CD4-positive, alpha-beta memory T cell (primary cell): ENCODE measurements at regions of chr16 and their contacts with region 1.

Region 1: DNA sequence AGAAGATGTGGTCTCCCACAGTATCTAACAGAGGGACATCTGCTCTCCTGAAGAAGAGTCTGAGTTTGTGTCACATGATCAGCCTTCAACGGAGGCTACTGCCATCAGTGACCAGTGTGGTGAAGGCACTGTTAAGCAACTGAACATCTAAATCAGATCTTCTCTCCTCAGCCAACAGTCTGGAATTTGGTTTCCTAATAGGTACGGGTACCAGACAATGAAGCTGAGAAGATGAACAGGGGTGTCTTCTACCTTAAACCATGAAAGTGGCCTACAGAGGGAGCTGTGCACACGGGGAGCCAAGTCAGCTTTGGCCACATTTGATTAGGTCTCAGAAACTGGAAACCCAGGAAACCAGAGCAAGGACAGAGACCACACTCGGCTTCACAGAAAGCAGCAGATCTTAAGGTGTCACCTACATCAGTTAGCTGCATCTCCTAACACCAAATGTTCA is 41.8 kb downstream of the BRD7 start:
- DNase-seq: peak; percentile 80 to 90 (median 84)
- H3K4me3 ChIP-seq: no peak overlapping the region
- H3K4me3 Mint-ChIP-seq: peak overlapping the region in 4 of 8 donors; percentile 37 to 70 (median 44)
- H3K27ac ChIP-seq: peak overlapping the region; percentile 51
- H3K27ac Mint-ChIP-seq: peak overlapping the region; percentile 74 to 98 (median 90)
- H3K4me1 ChIP-seq: peaks cover 32% of the 10 kb centered on the region
- H3K4me1 Mint-ChIP-seq: peaks cover 34 to 71% (median 38%) of the 10 kb centered on the region in 4 donors
- H3K27me3 ChIP-seq: no peaks in the 10 kb centered on the region
- H3K27me3 Mint-ChIP-seq: no peaks in the 10 kb centered on the region

Region 2: GRCh38 chr16:50024684-50025536 is 302.1 kb before region 1 on chr16 and contains the start of gene CNEP1R1:
- CTCF ChIA-PET with region 1: interaction called, 10 read pairs
- POLR2A ChIA-PET with region 1: interaction called, 4 read pairs
- intact Hi-C with region 1: no loop called
- DNase-seq: peak; percentile 93 to 97 (median 95)
- H3K4me3 ChIP-seq: peak within 1 kb of the TSS; percentile 76 to 85
- H3K4me3 Mint-ChIP-seq: peak within 1 kb of the TSS; percentile 94 to 99 (median 96)
- H3K27ac ChIP-seq: peak within 1 kb of the TSS; percentile 75
- H3K27ac Mint-ChIP-seq: peak within 1 kb of the TSS; percentile 91 to 99 (median 96)
- H3K4me1 ChIP-seq: peaks cover 34% of the 10 kb centered on the region
- H3K4me1 Mint-ChIP-seq: peaks cover 18 to 32% (median 24%) of the 10 kb centered on the region in 4 donors
- H3K27me3 ChIP-seq: no peaks in the 10 kb centered on the region
- H3K27me3 Mint-ChIP-seq: peaks cover 0 to 4% of the 10 kb centered on the region in 2 donors
- total RNA-seq, gene CNEP1R1: 34.2 to 40.8 TPM

Region 3: DNA sequence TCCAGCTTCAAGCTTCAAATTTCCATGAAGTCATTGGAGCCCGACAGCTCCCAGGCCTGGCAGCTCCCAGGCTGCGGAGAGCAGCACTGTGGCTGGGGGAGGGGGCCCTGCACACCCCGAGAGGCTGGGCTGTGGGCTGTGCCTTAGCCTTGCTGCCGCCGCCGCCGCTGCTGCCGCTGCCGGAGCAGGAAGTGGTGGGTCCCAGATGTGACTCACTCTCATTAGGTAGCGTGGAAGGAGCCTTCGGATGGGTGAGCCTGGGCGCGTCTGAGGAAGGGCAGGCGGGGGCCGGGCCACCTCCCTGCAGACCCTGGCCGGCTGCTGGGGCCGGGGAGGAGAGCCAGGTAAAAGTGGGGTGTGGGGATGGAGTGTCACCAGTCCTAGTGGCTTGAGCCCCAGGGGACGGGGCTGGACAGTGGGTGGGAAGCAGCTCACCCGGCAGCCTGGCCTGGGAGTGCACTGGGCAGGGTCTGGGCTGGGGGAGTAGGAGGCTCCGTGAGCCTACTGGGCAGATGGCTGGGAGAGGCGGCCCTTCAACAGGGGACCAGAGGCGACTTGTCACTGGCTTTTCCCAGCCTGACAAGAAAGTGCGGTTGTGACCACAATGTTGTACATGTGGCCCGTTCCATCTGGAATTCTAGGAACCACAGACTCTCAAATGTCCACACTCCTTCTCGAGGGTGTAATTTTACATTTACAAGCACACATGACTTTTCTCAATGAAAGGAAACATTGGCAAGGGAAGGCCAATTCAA is 60.5 kb before region 1 on chr16 and contains the start of gene ADCY7:
- CTCF ChIA-PET with region 1: interaction called, 26 read pairs
- POLR2A ChIA-PET with region 1: interaction called, 55 read pairs
- intact Hi-C with region 1: loop called (anchors 2 kb)
- DNase-seq: peak; percentile 77 to 92 (median 80)
- H3K4me3 ChIP-seq: peak within 1 kb of the TSS; percentile 75 to 76
- H3K4me3 Mint-ChIP-seq: peak within 1 kb of the TSS; percentile 93 to 99 (median 98)
- H3K27ac ChIP-seq: peak within 1 kb of the TSS; percentile 81
- H3K27ac Mint-ChIP-seq: peak within 1 kb of the TSS; percentile 95 to 99 (median 98)
- H3K4me1 ChIP-seq: peaks cover 60% of the 10 kb centered on the region
- H3K4me1 Mint-ChIP-seq: peaks cover 40 to 84% (median 56%) of the 10 kb centered on the region in 4 donors
- H3K27me3 ChIP-seq: no peaks in the 10 kb centered on the region
- H3K27me3 Mint-ChIP-seq: no peaks in the 10 kb centered on the region
- total RNA-seq, gene ADCY7: 230 to 235 TPM

Region 4: GRCh38 chr16:50281964-50282538 is 44.9 kb before region 1 on chr16:
- CTCF ChIA-PET with region 1: interaction called, 11 read pairs
- POLR2A ChIA-PET with region 1: interaction called, 9 read pairs
- intact Hi-C with region 1: no loop called
- DNase-seq: peak; percentile 62 to 84 (median 67)
- H3K4me3 ChIP-seq: peak overlapping the region in 1 of 2 donors; percentile 21
- H3K4me3 Mint-ChIP-seq: peak overlapping the region; percentile 76 to 92 (median 82)
- H3K27ac ChIP-seq: peak overlapping the region; percentile 57
- H3K27ac Mint-ChIP-seq: peak overlapping the region; percentile 77 to 99 (median 91)
- H3K4me1 ChIP-seq: peaks cover 94% of the 10 kb centered on the region
- H3K4me1 Mint-ChIP-seq: peaks cover 59 to 94% (median 81%) of the 10 kb centered on the region in 4 donors
- H3K27me3 ChIP-seq: no peaks in the 10 kb centered on the region
- H3K27me3 Mint-ChIP-seq: no peaks in the 10 kb centered on the region

Region 5: DNA sequence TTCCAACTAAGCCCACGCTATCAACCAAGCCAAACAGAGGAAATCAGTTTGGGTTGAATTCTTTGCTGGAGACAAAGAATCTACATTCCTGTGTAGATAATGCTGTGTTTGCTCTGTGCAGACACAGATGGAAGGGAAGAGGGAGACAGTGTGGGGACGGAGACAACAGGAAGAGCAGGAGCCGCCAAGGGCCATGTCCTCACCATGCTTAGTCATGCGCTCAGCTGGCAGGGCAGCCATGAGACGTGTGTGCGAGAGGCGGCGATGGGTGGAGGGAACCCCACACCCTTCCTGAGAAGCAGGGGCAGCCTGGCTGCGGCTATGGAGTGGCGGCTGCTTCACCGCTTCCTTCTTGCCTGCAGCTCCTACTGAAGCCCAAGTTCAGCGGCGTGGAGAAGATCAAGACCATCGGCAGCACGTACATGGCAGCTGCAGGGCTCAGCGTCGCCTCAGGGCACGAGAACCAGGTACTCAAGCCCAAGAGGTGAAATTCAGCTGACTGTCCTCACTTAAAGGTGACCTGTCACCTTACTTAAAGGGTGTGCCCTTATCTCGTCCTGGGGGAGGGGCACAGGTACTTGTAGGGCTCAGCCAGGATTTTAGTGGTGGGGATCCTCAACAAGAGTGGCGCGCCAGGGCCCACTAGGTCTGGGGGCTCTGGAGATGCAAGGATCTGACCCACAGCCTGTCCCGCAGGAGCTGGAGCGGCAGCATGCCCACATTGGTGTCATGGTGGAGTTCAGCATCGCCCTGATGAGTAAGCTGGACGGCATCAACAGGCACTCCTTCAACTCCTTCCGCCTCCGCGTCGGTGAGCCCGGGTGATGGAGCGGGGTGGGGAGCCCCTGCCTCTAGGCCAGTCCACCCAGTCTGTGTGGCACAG is 13.1 kb before region 1 on chr16:
- CTCF ChIA-PET with region 1: interaction called, 27 read pairs
- POLR2A ChIA-PET with region 1: interaction called, 27 read pairs
- intact Hi-C with region 1: no loop called
- DNase-seq: peak; percentile 26 to 67 (median 44)
- H3K4me3 ChIP-seq: no peak overlapping the region
- H3K4me3 Mint-ChIP-seq: peak overlapping the region in 5 of 8 donors; percentile 3 to 76 (median 17)
- H3K27ac ChIP-seq: no peak overlapping the region
- H3K27ac Mint-ChIP-seq: peak overlapping the region; percentile 62 to 90 (median 85)
- H3K4me1 ChIP-seq: peaks cover 25% of the 10 kb centered on the region
- H3K4me1 Mint-ChIP-seq: peaks cover 15 to 49% (median 29%) of the 10 kb centered on the region in 4 donors
- H3K27me3 ChIP-seq: no peaks in the 10 kb centered on the region
- H3K27me3 Mint-ChIP-seq: no peaks in the 10 kb centered on the region

Region 6: GRCh38 chr16:50354629-50355456 is 27.9 kb after region 1 on chr16:
- CTCF ChIA-PET with region 1: interaction called, 628 read pairs
- POLR2A ChIA-PET with region 1: interaction called, 297 read pairs
- intact Hi-C with region 1: loop called (anchors 1 kb)
- DNase-seq: peak in 4 of 5 donors; percentile 42 to 61 (median 54)
- H3K4me3 ChIP-seq: no peak overlapping the region
- H3K4me3 Mint-ChIP-seq: no peak overlapping the region
- H3K27ac ChIP-seq: no peak overlapping the region
- H3K27ac Mint-ChIP-seq: peak overlapping the region in 6 of 7 donors; percentile 0 to 89 (median 41)
- H3K4me1 ChIP-seq: peaks cover 3% of the 10 kb centered on the region
- H3K4me1 Mint-ChIP-seq: peaks cover 10 to 36% (median 23%) of the 10 kb centered on the region in 4 donors
- H3K27me3 ChIP-seq: no peaks in the 10 kb centered on the region
- H3K27me3 Mint-ChIP-seq: no peaks in the 10 kb centered on the region

Region 7: DNA sequence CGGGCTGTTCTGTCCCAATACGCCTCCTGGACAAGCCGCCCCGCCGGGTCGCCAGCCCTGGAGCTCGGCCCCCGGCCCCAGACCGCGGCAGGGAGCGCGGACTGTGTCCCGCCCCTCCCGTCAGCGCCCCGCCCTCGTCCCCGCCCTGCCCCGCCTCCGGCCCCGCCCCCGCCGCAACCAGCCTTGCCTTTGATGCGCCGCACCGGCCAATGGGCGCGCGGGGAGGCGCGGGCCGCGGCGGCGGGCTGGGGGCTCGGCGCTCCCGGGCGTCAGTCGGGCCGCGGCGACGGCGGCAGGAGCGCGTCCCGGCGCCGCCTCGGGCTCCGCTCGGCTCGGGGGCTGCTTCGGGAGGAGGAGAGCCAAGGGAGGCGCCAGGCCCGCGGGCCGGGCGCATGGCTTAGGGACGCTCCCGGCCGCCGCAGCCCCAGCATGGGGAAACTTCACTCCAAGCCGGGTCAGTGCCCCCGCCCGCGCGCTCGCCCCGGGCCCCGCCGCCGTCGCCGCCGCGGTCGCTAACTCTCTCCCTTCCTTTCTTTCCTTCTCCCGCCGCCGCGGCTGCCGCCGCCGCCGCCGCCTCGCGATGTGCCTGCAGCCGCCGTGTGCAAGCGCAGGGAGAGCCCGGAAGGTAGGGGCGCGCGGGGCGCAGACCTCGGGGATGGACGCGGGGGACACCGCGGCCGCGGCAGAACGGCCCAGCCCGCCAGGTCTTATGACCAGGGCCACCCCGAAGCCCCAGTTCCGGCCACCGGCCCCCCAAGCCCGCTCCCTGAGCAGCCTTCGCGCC is 221.3 kb after region 1 on chr16 and contains the start of gene NKD1:
- CTCF ChIA-PET with region 1: no interaction called
- POLR2A ChIA-PET with region 1: interaction called, 3 read pairs
- intact Hi-C with region 1: loop called (anchors 1 kb)
- DNase-seq: peak; percentile 64 to 78 (median 69)
- H3K4me3 ChIP-seq: peak within 1 kb of the TSS in 1 of 2 donors; percentile 68
- H3K4me3 Mint-ChIP-seq: peak within 1 kb of the TSS; percentile 81 to 89 (median 88)
- H3K27ac ChIP-seq: peak within 1 kb of the TSS; percentile 43
- H3K27ac Mint-ChIP-seq: peak within 1 kb of the TSS; percentile 90 to 96 (median 95)
- H3K4me1 ChIP-seq: peaks cover 30% of the 10 kb centered on the region
- H3K4me1 Mint-ChIP-seq: peaks cover 14 to 35% (median 25%) of the 10 kb centered on the region in 4 donors
- H3K27me3 ChIP-seq: no peaks in the 10 kb centered on the region
- H3K27me3 Mint-ChIP-seq: no peaks in the 10 kb centered on the region
- total RNA-seq, gene NKD1: 3.8 to 4.6 TPM